BJ (cell line): ENCODE measurements at regions of chr15 and their contacts with region 1.

Region 1: GRCh38 chr15:81400640-81401236 is 26.7 kb upstream of the TMC3 start:
- DNase-seq: no peak
- H3K4me3 ChIP-seq: no peak overlapping the region
- H3K27me3 ChIP-seq: peaks cover 2% of the 10 kb centered on the region
- CTCF ChIP-seq: peak; percentile 73

Region 2: GRCh38 chr15:81381720-81382119 is 19.0 kb before region 1 on chr15:
- CTCF ChIA-PET with region 1: interaction called, 13 read pairs
- POLR2A ChIA-PET with region 1: no interaction called
- DNase-seq: no peak
- H3K4me3 ChIP-seq: no peak overlapping the region
- H3K27me3 ChIP-seq: no peaks in the 10 kb centered on the region
- CTCF ChIP-seq: no peak

Region 3: DNA sequence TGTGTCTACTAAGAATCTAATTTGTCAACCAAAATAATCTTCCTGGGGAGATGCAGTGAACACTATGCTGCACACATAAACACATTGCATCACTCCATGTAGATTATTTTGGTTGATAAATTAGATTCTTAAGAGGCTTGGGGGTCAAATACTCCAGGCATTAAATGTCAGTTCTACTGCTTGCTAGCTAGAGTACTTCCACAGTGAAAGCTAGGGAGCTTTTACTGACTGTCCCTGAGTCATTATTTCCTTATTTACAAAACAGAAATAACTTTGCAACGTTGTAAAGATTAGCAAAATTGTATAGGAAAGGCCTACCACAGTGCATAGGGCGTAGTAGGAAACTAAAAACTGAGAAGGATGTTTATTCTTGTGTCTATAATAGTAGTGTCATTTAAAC is 13.8 kb before region 1 on chr15:
- CTCF ChIA-PET with region 1: interaction called, 13 read pairs
- POLR2A ChIA-PET with region 1: no interaction called
- DNase-seq: no peak
- H3K4me3 ChIP-seq: no peak overlapping the region
- H3K27me3 ChIP-seq: no peaks in the 10 kb centered on the region
- CTCF ChIP-seq: no peak